Gastrocnemius medialis (tissue), 4 donors: ENCODE measurements at regions of chr16 and their contacts with region 1.

Region 1: DNA sequence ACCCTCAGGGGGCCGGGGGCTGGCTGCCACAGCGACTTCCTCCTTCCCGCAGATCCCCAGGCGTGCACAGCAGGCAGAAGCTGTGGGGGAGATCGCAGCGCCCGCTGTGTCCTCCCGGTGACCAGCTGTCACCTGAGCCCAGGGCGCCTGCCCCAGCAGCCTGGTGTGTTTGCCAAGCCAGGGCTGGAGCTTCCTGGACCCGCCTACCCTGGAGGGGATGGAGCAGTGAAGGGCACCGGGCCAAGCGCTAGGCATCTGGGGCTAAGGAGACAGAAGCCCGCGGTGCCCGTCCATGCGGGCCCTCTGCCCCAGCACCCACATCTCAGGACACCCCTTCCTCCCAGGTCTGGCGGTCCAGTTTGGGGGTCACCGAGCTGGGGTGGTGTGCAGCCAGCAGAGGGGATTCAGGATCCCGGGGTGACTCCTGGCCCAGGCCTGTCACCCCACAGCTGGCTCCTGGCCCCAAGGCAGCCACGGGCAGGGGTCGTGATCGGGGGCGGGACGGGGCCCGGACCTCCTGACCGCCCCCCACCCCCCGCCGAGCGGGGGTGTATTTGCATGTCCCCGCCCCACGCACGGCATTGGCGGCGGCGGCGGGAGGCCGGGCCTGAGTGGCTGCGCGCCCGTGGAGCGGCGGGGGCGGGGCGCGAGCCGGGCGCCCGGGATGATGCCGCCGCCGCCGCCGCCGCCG is at the start of gene RAB26:
- DNase-seq: peak; percentile 89 to 94
- ATAC-seq: peak; percentile 91 to 92
- H3K4me3 ChIP-seq: peak within 1 kb of the TSS; percentile 57 to 68 (median 60)
- H3K27ac ChIP-seq: peak within 1 kb of the TSS; percentile 90 to 100 (median 96)
- H3K4me1 ChIP-seq: peaks cover 35 to 44% of the 10 kb centered on the region in 2 donors
- H3K27me3 ChIP-seq: no peaks in the 10 kb centered on the region
- CTCF ChIP-seq: peak in 1 of 5 experiments; percentile 9
- POLR2A ChIP-seq: peak in 1 of 2 donors; percentile 40
- total RNA-seq, gene RAB26: 1.3 to 4.2 TPM in 2 of 4 donors, not detected in the others

Region 2: GRCh38 chr16:2009789-2010510 is 138.2 kb before region 1 on chr16 and contains the start of gene ZNF598:
- in situ Hi-C with region 1: loop called in 2 of 4 experiments (anchors 5 to 10 kb)
- intact Hi-C with region 1: no loop called
- DNase-seq: peak; percentile 61 to 75
- ATAC-seq: peak; percentile 90 to 95
- H3K4me3 ChIP-seq: peak within 1 kb of the TSS; percentile 63 to 97 (median 84)
- H3K27ac ChIP-seq: peak within 1 kb of the TSS; percentile 85 to 99 (median 95)
- H3K4me1 ChIP-seq: peaks cover 37 to 47% of the 10 kb centered on the region in 2 donors
- H3K27me3 ChIP-seq: no peaks in the 10 kb centered on the region
- CTCF ChIP-seq: peak in 1 of 5 experiments; percentile 8
- POLR2A ChIP-seq: peak; percentile 85 to 96
- total RNA-seq, gene ZNF598: 57.0 to 92.2 (median 75.4) TPM

Region 3: GRCh38 chr16:2071454-2072202 is 76.5 kb before region 1 on chr16:
- in situ Hi-C with region 1: no loop called
- intact Hi-C with region 1: no loop called
- DNase-seq: no peak
- ATAC-seq: no peak
- H3K4me3 ChIP-seq: no peak overlapping the region
- H3K27ac ChIP-seq: no peak overlapping the region
- H3K4me1 ChIP-seq: no peaks in the 10 kb centered on the region
- H3K27me3 ChIP-seq: no peaks in the 10 kb centered on the region
- CTCF ChIP-seq: no peak
- POLR2A ChIP-seq: no peak

Region 4: GRCh38 chr16:2121853-2122252 is 26.3 kb before region 1 on chr16:
- in situ Hi-C with region 1: no loop called
- intact Hi-C with region 1: loop called (anchors 2 kb)
- DNase-seq: peak; percentile 50 to 82
- ATAC-seq: peak; percentile 34 to 49
- H3K4me3 ChIP-seq: peak overlapping the region in 3 of 4 donors; percentile 13 to 48 (median 40)
- H3K27ac ChIP-seq: peak overlapping the region; percentile 98 to 100 (median 98)
- H3K4me1 ChIP-seq: peaks cover 70 to 89% of the 10 kb centered on the region in 2 donors
- H3K27me3 ChIP-seq: no peaks in the 10 kb centered on the region
- CTCF ChIP-seq: no peak
- POLR2A ChIP-seq: no peak